ENCODE measurements at regions of chr2 and their contacts with region 1.

Region 1: DNA sequence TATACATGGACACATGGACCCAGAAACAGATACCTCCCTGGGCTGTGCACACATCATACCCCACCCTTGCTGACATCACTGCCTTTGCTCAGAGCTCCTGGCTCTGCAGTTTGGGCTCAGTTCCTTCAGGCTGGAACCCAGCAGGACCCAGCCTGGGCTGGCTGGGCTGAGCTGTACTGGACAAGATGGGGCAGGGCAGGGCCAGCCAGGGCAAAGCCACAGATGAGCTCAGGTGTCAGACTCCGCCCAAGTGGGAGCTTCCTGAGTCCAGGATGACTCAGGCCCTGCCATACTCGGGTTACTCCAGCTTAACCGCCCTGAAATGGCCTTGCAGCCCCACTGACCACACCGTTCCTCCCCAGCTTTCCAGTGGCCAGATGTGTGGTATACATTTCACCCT is 284.9 kb downstream of the OSR1 start:
- DNase-seq: peak; percentile 65 to 87
- ATAC-seq: peak; percentile 99 to 100 (median 100)
- H3K4me3 ChIP-seq: no peak overlapping the region
- H3K27ac ChIP-seq: peak overlapping the region; percentile 50
- H3K4me1 ChIP-seq: peaks cover 18% of the 10 kb centered on the region
- H3K27me3 ChIP-seq: no peaks in the 10 kb centered on the region
- CTCF ChIP-seq: no peak

Region 2: GRCh38 chr2:18987592-18988073 is 85.9 kb before region 1 on chr2:
- intact Hi-C with region 1: loop called in 1 of 2 experiments (anchors 5 kb)
- DNase-seq: peak; percentile 78 to 81
- ATAC-seq: peak in 3 of 4 donors; percentile 65 to 88 (median 66)
- H3K4me3 ChIP-seq: no peak overlapping the region
- H3K27ac ChIP-seq: no peak overlapping the region
- H3K4me1 ChIP-seq: peaks cover 10% of the 10 kb centered on the region
- H3K27me3 ChIP-seq: no peaks in the 10 kb centered on the region
- CTCF ChIP-seq: peak; percentile 41

Measured in psoas muscle (tissue), 8 donors.